ENCODE measurements at regions of chr16 and their contacts with region 1.

Region 1: GRCh38 chr16:3150346-3151218 is 15.8 kb downstream of the ZNF213 start:
- DNase-seq: peak; percentile 100
- H3K4me3 Mint-ChIP-seq: peak overlapping the region; percentile 84
- H3K27ac Mint-ChIP-seq: peak overlapping the region; percentile 82
- H3K4me1 Mint-ChIP-seq: peaks cover 27% of the 10 kb centered on the region
- H3K27me3 Mint-ChIP-seq: peaks cover 12% of the 10 kb centered on the region

Region 2: DNA sequence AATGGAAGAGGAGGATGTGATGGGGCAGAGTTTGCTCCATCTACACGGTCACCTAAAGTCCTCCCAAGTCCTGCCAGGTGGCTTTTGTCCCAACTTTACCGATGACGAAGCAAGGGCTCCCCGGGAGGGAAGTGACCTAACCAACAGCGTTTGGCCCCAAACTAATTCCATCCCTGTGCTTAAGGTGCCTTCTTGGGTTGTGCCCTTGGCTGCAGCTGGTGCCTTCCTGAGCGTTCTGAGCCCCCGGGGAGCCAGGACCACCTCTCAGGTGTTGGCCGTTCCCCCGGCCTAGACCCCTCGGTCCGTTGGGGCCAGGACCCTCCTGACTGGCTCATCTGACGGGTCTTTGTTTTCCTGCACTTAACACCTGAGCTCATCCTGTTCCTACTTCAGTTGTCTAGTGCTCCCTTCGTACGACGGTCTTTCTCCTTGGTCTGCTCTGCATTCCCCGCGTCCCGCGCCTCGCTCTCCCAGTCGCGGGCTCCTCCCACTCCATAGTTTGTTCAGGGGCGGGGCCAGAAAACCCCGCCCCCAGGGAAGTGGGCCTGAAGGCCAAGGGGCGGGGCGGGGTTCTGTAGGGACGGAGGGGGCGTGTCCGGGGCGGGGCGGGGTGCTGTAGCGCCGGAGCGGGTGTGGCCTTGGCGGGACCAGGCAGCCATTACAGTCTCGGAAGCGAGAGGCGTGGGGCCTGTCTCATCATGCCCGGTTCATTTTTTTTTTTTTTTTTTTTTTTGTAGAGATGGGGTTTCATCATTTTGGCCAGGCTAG is 50.7 kb before region 1 on chr16:
- CTCF ChIA-PET with region 1: interaction called, 8 read pairs
- POLR2A ChIA-PET with region 1: interaction called, 4 read pairs
- intact Hi-C with region 1: loop called (anchors 2 kb)
- DNase-seq: peak; percentile 97
- H3K4me3 Mint-ChIP-seq: peak overlapping the region; percentile 65
- H3K27ac Mint-ChIP-seq: peak overlapping the region; percentile 54
- H3K4me1 Mint-ChIP-seq: peaks cover 39% of the 10 kb centered on the region
- H3K27me3 Mint-ChIP-seq: no peaks in the 10 kb centered on the region

Region 3: GRCh38 chr16:3134564-3135417 is 15.8 kb before region 1 on chr16 and contains the start of gene ZNF213:
- CTCF ChIA-PET with region 1: interaction called, 80 read pairs
- POLR2A ChIA-PET with region 1: interaction called, 16 read pairs
- intact Hi-C with region 1: loop called (anchors 1 kb)
- DNase-seq: peak; percentile 96
- H3K4me3 Mint-ChIP-seq: peak within 1 kb of the TSS; percentile 96
- H3K27ac Mint-ChIP-seq: peak within 1 kb of the TSS; percentile 93
- H3K4me1 Mint-ChIP-seq: peaks cover 24% of the 10 kb centered on the region
- H3K27me3 Mint-ChIP-seq: no peaks in the 10 kb centered on the region
- total RNA-seq, gene ZNF213: 9.0 TPM

Region 4: GRCh38 chr16:3173892-3174617 is 23.5 kb after region 1 on chr16:
- CTCF ChIA-PET with region 1: interaction called, 14 read pairs
- POLR2A ChIA-PET with region 1: interaction called, 3 read pairs
- intact Hi-C with region 1: loop called (anchors 1 kb)
- DNase-seq: peak; percentile 57
- H3K4me3 Mint-ChIP-seq: peak overlapping the region; percentile 71
- H3K27ac Mint-ChIP-seq: peak overlapping the region; percentile 19
- H3K4me1 Mint-ChIP-seq: peaks cover 34% of the 10 kb centered on the region
- H3K27me3 Mint-ChIP-seq: peaks cover 51% of the 10 kb centered on the region

Region 5: GRCh38 chr16:3182608-3183444 is 32.2 kb after region 1 on chr16:
- CTCF ChIA-PET with region 1: interaction called, 4 read pairs
- POLR2A ChIA-PET with region 1: no interaction called
- intact Hi-C with region 1: loop called (anchors 2 kb)
- DNase-seq: peak; percentile 77
- H3K4me3 Mint-ChIP-seq: peak overlapping the region; percentile 78
- H3K27ac Mint-ChIP-seq: peak overlapping the region; percentile 84
- H3K4me1 Mint-ChIP-seq: peaks cover 27% of the 10 kb centered on the region
- H3K27me3 Mint-ChIP-seq: peaks cover 70% of the 10 kb centered on the region

Region 6: DNA sequence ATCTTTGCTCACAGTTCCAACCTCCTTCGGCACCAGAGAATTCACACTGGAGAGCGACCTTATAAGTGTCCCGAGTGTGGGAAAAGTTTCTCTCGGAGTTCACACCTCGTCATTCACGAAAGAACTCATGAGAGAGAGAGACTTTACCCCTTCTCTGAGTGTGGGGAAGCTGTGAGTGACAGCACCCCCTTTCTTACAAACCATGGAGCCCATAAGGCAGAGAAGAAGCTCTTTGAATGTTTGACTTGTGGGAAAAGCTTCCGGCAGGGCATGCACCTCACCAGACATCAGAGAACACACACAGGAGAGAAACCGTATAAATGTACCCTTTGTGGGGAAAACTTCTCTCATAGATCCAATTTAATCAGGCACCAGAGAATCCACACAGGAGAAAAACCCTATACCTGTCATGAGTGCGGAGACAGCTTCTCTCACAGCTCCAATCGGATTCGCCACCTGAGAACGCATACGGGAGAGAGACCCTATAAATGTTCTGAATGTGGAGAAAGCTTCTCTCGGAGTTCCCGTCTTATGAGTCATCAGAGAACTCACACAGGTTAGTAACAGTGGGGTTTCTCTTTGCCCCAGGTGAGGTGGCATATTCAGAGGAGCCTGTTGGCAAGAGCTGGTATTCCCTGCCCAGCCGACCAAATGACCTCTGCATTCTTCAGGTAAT is 139.6 kb after region 1 on chr16:
- CTCF ChIA-PET with region 1: no interaction called
- POLR2A ChIA-PET with region 1: no interaction called
- intact Hi-C with region 1: no loop called
- DNase-seq: no peak
- H3K4me3 Mint-ChIP-seq: no peak overlapping the region
- H3K27ac Mint-ChIP-seq: no peak overlapping the region
- H3K4me1 Mint-ChIP-seq: peaks cover 18% of the 10 kb centered on the region
- H3K27me3 Mint-ChIP-seq: no peaks in the 10 kb centered on the region

Region 7: DNA sequence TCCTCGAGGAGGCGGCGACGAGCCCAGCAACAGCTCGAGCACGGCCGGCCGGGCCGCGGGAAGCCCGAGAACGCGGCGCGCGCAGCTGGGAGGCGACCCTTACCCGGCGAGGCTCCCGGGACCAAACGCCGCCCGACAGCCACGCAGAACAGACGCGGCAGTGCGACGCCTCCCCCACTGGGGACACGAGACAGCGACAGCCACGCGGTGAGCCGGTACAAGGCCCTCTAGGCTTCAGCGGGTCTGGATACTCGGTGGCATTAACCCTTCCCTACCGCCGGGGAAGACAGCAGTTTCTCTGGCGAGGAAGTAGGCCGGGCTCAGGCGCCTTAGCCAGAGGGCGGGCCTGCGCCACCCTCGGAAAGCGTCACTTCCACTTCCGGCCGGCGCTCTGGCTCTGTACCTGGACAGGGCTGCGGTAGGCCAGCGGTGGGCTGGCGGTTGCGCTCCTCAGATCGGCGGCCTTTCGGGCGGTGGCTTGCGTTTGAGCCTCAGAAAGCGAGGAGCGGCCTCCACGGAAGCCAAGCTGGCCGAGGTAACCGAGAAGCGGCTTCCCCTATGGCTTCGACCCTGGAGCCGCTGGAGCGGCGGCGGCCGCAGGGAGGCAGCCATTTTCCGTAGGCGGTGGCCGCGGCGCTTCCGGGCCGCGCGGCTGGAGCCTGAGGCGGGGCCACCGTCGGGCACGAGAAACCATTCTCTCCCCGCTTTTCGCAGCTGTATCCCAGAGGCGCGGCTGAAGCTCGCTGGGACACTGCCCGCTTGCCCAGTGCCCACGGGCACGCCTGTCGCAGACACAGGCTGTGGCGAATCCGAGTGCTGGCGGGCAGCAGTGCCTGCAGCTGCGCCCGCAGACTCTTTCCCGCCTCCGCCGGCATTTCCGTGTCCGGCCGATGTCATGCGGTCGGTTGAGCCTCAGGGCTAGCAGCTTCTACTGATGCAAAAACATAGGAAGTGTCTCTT is 154.8 kb after region 1 on chr16 and contains the starts of genes TIGD7 and ZNF75A:
- CTCF ChIA-PET with region 1: no interaction called
- POLR2A ChIA-PET with region 1: no interaction called
- intact Hi-C with region 1: no loop called
- DNase-seq: peak; percentile 88
- H3K4me3 Mint-ChIP-seq: peak within 1 kb of the TSS; percentile 71
- H3K27ac Mint-ChIP-seq: peak within 1 kb of the TSS; percentile 79
- H3K4me1 Mint-ChIP-seq: peaks cover 12% of the 10 kb centered on the region
- H3K27me3 Mint-ChIP-seq: no peaks in the 10 kb centered on the region
- total RNA-seq, gene TIGD7: 3.3 to 3.4 TPM
- total RNA-seq, gene ZNF75A: 19.3 to 20.0 TPM

Measured in activated CD4-positive, alpha-beta memory T cell treated with anti-CD3 and anti-CD28 coated beads for 36 hours (primary cell).